Body of pancreas (tissue), 4 donors: ENCODE measurements at regions of chr1 and their contacts with region 1.

Region 1: GRCh38 chr1:19762175-19762779 is 37.4 kb downstream of the TMCO4 start:
- DNase-seq: peak; percentile 21 to 60 (median 41)
- ATAC-seq: peak; percentile 58
- H3K4me3 ChIP-seq: no peak overlapping the region
- H3K27ac ChIP-seq: no peak overlapping the region
- H3K4me1 ChIP-seq: peaks cover 3% of the 10 kb centered on the region
- H3K27me3 ChIP-seq: no peaks in the 10 kb centered on the region
- CTCF ChIP-seq: peak; percentile 39 to 68 (median 63)
- POLR2A ChIP-seq: no peak

Region 2: DNA sequence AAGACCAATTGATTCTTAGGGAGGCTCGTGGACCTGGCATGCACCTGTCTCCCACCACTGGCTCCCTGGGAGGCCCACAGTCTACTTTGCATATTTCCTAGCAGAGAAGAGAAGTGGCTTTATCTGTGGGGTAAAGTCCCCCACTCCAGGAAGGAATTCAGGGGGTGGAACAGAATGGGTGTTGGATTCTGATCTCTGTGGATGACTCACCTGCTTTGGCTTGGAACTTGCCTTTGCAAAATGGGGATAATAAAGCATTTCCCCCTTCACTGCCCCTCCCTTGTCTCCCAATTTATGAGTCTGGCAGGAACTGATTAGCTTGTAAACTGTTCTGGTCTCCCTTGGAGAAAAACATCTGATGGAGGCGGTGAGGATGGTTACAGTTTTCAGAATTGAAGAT is 98.8 kb after region 1 on chr1:
- intact Hi-C with region 1: loop called (anchors 10 kb)
- DNase-seq: peak in 1 of 4 donors; percentile 6
- ATAC-seq: peak; percentile 50
- H3K4me3 ChIP-seq: no peak overlapping the region
- H3K27ac ChIP-seq: peak overlapping the region in 1 of 4 donors; percentile 7
- H3K4me1 ChIP-seq: no peaks in the 10 kb centered on the region
- H3K27me3 ChIP-seq: no peaks in the 10 kb centered on the region
- CTCF ChIP-seq: no peak
- POLR2A ChIP-seq: no peak